Activated CD8-positive, alpha-beta T cell treated with anti-CD3 and anti-CD28 coated beads, Interleukin-2, amount 10 ng/mL, durations not matched to agents 7 days and 5 days (primary cell): ENCODE measurements at regions of chr9 and their contacts with region 1.

Region 1: DNA sequence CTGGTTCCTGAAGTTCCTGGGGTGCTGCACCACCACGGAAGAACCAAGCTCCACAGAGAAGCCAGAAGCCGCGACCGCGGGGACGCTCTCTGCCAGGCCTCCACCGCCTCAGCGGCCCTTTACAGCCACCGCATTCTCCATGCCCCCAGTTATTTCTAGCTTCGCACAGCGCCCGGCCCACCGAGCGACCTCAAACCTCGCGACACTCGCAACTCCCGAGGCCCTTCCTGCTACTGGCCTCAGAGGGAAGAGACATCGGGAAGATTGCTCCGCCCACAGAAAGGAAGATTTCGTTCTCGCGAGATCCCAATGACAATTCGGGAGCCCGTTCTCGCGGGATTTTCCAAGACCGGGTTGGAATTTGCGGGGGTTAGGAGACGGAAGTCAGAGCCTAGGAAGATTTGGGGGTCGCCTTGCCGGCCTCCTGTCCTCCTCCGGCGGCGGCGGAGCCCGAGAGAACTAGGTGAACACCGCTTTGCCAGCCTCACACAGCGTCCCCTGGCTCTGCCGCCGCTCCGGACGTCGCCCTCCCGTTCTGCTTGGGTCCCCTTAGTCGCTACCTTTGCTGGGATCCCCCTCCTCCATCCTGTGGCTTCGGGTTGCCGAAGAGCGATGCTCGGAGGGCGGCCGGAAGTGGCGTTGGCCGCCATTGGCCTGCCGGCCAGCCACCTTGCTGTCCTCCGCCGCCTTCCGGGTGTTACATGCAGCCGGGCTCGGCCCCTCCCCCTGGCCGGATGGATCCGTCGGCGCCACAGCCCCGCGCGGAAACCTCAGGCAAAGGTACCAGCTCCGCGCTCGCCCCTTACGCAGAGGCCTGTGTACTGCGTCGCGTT is at the start of gene ERCC6L2:
- DNase-seq: peak; percentile 96
- ATAC-seq: peak; percentile 84
- H3K4me3 Mint-ChIP-seq: no peak within 1 kb of the TSS
- H3K27ac Mint-ChIP-seq: no peak within 1 kb of the TSS
- H3K4me1 Mint-ChIP-seq: peaks cover 26% of the 10 kb centered on the region
- H3K27me3 Mint-ChIP-seq: no peaks in the 10 kb centered on the region
- total RNA-seq, gene ERCC6L2: 32.2 to 33.1 TPM

Region 2: GRCh38 chr9:95793924-95794828 is 81.3 kb before region 1 on chr9:
- CTCF ChIA-PET with region 1: no interaction called
- POLR2A ChIA-PET with region 1: no interaction called
- DNase-seq: no peak
- ATAC-seq: no peak
- H3K4me3 Mint-ChIP-seq: no peak overlapping the region
- H3K27ac Mint-ChIP-seq: no peak overlapping the region
- H3K4me1 Mint-ChIP-seq: peaks cover 3% of the 10 kb centered on the region
- H3K27me3 Mint-ChIP-seq: peaks cover 34% of the 10 kb centered on the region

Region 3: DNA sequence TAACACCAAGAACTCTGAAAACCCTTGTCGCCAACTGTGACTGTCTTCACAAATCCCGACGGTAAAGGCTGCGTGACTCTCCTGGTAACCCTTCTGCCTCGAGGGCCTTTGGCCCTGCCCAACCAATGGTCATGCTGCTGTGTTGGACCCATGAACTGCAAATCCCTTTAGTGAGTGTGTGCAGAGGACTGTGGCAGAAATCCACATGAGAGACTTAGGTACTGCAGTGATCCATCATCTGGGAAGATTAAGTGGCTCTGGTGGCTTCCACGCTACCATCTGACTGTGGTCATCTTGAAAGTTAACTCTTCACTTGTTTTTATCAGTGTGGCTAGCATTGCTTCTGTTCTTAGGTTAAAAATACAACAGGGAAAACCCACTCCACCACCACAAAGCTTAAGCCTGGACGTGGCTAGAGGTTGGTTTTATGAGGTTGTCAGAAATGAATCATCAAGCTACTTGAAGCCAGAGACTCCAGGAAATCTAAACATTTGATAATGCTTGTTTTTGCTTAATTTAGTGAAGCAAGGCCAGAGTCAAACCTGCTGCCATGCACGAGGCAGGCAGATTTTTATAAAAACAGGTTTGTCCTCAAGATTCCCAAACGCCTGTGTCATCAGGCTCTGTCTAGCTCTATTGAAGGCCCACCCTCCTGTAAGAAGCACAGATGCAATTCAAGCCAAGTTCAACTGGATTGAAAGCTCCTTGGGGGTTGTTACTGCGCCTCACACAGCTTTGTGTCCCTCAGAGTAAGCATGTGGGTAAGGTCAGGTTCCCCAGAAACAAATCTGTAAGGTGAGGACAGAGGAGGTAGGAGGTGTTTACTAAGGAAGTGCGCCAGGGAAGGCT is 52.7 kb before region 1 on chr9:
- CTCF ChIA-PET with region 1: interaction called, 3 read pairs
- POLR2A ChIA-PET with region 1: interaction called, 10 read pairs
- DNase-seq: peak; percentile 72
- ATAC-seq: peak; percentile 83
- H3K4me3 Mint-ChIP-seq: peak overlapping the region; percentile 9
- H3K27ac Mint-ChIP-seq: peak overlapping the region; percentile 51
- H3K4me1 Mint-ChIP-seq: peaks cover 41% of the 10 kb centered on the region
- H3K27me3 Mint-ChIP-seq: peaks cover 57% of the 10 kb centered on the region

Region 4: DNA sequence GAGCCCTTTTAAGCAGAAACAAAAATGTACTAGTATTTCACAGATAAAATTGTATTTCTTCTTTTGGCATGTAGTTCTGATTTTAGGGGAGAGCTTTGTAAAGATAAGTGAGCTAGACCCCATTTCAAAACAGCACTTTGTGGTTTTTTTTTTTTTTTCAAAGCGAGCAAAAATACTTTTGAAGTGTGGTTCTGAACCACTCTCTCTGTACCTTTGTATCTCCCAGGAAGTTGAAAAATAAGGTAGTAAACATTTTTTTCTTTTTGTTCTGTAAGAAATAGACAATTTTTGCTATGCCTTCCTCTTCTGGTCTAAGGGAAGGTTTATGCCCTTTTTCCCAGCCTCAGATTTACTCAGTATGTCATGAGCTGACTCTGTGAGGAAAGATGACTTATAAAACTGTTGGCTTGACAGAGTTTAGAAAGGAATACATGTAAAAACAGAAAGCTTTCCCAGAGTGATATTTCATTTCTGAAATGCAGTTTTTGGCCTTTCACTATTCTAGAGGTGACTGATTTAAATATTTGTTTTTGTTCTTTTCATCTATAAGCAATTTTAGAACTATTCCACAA is 12.5 kb after region 1 on chr9:
- CTCF ChIA-PET with region 1: interaction called, 8 read pairs
- POLR2A ChIA-PET with region 1: interaction called, 15 read pairs
- DNase-seq: no peak
- ATAC-seq: peak; percentile 70
- H3K4me3 Mint-ChIP-seq: peak overlapping the region; percentile 67
- H3K27ac Mint-ChIP-seq: peak overlapping the region; percentile 80
- H3K4me1 Mint-ChIP-seq: peaks cover 62% of the 10 kb centered on the region
- H3K27me3 Mint-ChIP-seq: no peaks in the 10 kb centered on the region

Region 5: DNA sequence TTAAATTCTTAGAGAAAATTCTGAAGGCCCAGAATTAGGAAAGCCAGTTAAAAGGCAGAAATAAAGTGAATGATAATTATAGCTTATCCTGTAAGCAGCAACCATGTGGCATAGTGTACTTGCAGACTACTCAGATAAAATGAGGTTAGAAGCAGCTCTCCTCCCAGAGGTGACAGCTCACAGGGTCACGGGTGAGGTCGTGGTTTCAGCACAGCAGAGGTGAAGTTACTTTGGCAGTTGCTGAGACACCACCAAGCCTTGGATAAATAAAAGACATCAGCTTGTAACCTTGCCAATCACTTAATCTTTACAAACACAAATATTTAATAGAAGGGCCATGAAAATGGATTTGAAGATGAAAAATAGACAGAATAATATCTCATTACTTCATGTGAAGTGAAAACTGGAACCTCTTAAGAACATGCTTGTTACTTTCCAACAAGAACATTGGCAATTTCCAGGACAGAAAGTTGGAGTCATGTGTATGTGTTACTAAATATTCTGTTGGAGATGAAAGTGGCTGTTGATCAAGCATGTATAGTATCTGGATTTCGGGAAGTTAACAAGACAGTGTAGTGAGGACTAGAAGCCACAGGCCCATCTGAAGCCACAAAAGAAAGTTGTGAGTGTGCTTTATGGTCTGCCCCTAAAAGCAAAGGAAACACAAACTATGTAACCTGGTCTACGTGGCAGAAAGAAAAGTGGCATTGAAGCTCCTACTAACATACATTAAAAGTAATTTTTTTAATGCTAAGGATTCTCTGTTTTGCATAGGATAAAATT is 134.4 kb after region 1 on chr9:
- CTCF ChIA-PET with region 1: interaction called, 3 read pairs
- POLR2A ChIA-PET with region 1: interaction called, 27 read pairs
- DNase-seq: peak; percentile 89
- ATAC-seq: peak; percentile 89
- H3K4me3 Mint-ChIP-seq: peak overlapping the region; percentile 39
- H3K27ac Mint-ChIP-seq: peak overlapping the region; percentile 89
- H3K4me1 Mint-ChIP-seq: peaks cover 60% of the 10 kb centered on the region
- H3K27me3 Mint-ChIP-seq: no peaks in the 10 kb centered on the region

Region 6: DNA sequence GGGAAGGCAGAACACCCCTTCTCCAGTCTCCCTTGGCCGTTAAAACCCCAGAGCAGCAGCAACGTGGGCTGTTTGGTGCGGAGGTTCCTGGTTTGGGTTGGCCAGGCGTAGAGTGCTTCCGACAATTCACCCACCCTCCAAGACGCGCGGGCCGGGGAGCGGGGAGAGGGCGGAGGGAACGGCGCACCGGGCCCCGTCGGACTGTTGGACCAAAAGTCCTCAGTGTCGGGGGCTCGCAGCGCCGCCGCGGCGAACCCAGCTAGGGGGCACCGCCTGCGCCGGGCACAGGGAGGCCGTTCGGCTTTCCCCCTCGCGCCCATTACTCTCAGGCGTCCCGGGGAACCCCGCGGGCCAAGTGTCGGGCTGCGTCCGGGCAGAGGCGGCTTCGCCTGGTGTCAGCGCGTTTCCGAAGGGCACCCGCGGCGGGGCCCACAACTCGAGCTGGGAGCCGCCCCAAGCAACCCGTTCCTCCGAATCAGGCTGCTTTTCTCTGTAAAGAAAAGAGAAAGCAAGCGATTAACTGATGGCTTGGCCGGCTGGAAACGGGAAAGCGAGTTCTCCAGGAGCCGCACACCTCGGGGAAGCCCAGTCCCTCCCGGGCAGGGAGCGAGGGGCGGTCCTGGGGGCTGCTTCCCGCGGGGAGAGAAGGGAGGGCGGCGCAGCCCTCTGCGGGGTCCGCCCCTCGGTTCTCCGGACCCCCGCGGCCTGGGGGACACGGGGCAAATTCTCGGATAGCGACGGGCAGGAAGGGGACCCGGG is 145.4 kb after region 1 on chr9:
- CTCF ChIA-PET with region 1: no interaction called
- POLR2A ChIA-PET with region 1: interaction called, 27 read pairs
- DNase-seq: peak; percentile 67
- ATAC-seq: peak; percentile 42
- H3K4me3 Mint-ChIP-seq: peak overlapping the region; percentile 82
- H3K27ac Mint-ChIP-seq: peak overlapping the region; percentile 93
- H3K4me1 Mint-ChIP-seq: peaks cover 84% of the 10 kb centered on the region
- H3K27me3 Mint-ChIP-seq: no peaks in the 10 kb centered on the region